ENCODE measurements at regions of chr3 and their contacts with region 1.

Region 1: DNA sequence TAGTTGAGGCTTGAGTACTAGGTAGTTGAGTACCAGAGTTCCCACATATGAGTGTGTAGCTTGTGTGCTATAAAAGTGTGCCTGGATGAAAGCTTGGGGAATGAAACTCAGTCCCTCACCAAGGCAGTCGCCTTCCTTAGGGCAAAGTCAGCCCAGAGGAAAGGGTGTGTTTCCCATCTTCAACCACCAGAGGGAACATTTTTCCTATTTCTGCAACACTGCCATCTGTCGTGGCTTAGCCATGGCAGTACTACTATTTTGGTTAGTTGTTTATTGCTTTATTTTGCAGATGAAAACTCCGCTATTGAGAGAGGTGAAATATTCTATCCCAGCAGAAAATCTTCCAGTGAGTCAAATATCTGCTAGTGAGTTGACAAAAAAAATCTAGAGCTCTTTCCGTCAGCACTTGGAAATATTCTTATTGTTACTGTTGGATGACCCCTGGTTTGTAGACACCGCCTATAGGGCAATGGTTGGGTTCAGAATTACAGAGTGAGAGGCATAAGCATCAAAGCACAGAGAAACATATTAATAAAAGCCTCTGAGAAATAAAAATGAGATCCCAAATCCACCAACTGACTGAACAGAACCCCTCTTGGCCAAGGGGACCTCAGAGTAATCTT is 239.9 kb downstream of the CPNE4 start:
- DNase-seq: no peak
- H3K4me3 ChIP-seq: no peak overlapping the region
- H3K27ac ChIP-seq: no peak overlapping the region
- H3K4me1 ChIP-seq: no peaks in the 10 kb centered on the region
- H3K27me3 ChIP-seq: no peaks in the 10 kb centered on the region
- CTCF ChIP-seq: peak; percentile 34 to 87 (median 64)

Region 2: DNA sequence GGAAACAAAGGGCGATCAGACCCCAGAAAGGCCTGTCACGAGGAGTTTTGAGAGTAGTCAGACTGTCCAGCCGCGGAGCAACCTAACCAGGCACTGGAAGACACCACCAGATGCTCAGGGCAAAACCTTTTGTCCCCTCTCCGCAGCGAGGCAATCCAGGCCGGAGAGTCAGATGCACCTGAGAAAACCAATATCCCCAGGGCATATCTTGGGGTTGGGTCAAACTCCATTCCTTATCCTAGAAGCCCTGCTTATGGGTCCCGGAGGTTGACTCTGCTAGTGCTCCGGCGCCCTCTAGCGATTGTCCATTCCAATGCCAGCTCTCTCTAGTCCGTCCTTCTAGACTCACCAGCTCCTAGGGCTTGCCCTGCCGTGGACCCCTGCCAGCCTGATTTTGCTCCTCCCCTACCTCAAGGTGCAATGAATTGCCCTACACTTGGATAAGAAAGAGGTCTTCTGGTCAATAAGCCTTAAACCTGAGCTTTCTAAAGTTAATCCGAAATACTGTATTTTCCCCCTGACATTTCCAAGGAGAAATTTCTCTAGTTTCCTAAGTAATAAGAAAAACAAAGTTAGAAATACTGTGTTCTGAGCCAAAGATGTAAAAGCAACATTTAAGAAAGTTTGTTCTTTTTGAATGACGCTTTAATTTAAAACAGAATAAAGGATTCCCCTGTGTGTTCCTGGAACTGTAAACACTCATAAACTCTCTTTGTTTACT is 234.5 kb after region 1 on chr3:
- intact Hi-C with region 1: loop called (anchors 1 kb)
- DNase-seq: peak; percentile 14 to 85
- H3K4me3 ChIP-seq: no peak overlapping the region
- H3K27ac ChIP-seq: no peak overlapping the region
- H3K4me1 ChIP-seq: peaks cover 0 to 2% of the 10 kb centered on the region in 2 donors
- H3K27me3 ChIP-seq: no peaks in the 10 kb centered on the region
- CTCF ChIP-seq: peak; percentile 67 to 90 (median 79)

Region 3: GRCh38 chr3:132180337-132180791 is 385.5 kb after region 1 on chr3:
- intact Hi-C with region 1: loop called (anchors 5 kb)
- DNase-seq: no peak
- H3K4me3 ChIP-seq: no peak overlapping the region
- H3K27ac ChIP-seq: no peak overlapping the region
- H3K4me1 ChIP-seq: no peaks in the 10 kb centered on the region
- H3K27me3 ChIP-seq: no peaks in the 10 kb centered on the region
- CTCF ChIP-seq: peak; percentile 15 to 60 (median 37)